WTC11 (cell line): ENCODE measurements at regions of chr9 and their contacts with region 1.

Region 1: DNA sequence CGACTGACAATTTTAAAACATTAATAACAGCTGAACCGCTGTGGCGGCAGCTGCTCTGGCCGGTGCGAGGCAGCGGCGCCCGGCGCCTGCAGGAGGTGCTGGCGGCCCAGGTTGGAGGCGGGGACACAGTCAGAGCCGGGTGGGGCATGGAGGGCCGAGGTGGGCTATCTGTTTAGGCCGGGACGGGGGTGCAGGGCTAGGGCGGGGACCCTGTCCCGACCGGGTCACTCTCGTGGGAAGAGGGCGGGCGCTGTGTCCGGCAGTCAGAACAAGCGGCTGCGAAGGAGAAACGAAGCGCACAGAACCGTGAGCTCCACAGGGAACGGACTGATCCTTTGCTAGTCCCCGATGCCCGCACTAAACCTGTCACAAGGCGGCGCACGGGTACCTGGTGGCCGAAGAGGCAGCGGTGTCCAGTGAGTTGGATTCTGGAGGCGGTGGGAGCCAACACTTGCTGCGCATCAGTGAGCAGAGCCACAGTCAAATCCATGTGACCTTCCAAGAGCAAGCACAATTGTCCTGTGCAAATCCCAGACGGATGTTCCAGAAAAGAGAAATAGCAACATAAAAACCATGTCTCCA is 13.7 kb upstream of the ALDOB start:
- DNase-seq: peak; percentile 91
- ATAC-seq: peak; percentile 98
- H3K4me3 Mint-ChIP-seq: peak overlapping the region; percentile 64
- H3K27ac Mint-ChIP-seq: no peak overlapping the region
- H3K4me1 Mint-ChIP-seq: peaks cover 14% of the 10 kb centered on the region
- H3K27me3 Mint-ChIP-seq: no peaks in the 10 kb centered on the region; the same call in none of the 2 replicates
- CTCF ChIP-seq: peak; percentile 44; the same call in 1 of the 2 replicates

Region 2: GRCh38 chr9:101365181-101365580 is 84.0 kb before region 1 on chr9:
- CTCF ChIA-PET with region 1: no interaction called
- POLR2A ChIA-PET with region 1: no interaction called
- DNase-seq: no peak
- ATAC-seq: no peak
- H3K4me3 Mint-ChIP-seq: no peak overlapping the region
- H3K27ac Mint-ChIP-seq: no peak overlapping the region
- H3K4me1 Mint-ChIP-seq: no peaks in the 10 kb centered on the region
- H3K27me3 Mint-ChIP-seq: no peaks in the 10 kb centered on the region
- CTCF ChIP-seq: no peak

Region 3: DNA sequence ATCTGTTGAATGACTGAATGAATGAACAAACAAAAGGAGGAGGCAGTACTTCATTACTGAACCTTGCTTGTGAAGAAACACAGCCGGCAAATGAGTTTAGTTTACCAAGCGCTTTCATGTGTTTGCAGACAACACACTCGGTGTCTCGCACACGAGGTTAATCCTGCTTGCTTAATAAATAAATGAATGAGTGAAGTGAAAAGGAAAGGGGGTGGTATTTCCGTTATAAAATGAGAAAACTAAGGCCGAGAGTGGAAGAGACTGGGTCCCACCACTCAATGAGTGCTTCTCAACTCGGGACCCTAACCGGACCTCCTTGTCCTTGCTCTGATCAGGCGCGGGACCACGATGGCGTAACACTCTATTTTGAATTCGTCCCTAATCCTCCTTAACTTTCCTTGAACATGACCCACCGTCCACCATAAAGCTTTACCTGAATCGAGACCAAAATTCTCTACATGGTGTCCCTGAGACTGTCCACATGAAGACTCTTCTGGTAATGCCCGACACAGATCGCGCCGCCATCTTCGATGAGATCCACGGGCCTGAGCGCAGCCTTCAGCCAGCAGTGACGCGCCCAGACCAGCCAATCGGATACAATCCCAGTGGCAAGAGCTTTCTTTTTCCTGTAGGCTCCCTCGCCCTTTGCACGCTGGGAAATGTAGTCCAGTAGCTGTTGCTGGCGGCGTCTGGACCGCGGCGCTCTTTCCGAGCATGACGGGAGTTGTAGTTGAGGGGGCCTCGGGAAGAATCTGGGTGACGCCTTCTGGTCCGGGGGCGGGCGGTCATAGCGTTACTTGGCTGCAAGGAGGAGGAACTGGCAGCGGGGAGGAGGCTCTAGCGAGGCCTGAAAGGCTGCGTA is 50.9 kb before region 1 on chr9 and contains the starts of genes MRPL50 and ZNF189:
- CTCF ChIA-PET with region 1: interaction called, 15 read pairs
- POLR2A ChIA-PET with region 1: no interaction called
- DNase-seq: peak; percentile 96
- ATAC-seq: peak; percentile 97
- H3K4me3 Mint-ChIP-seq: peak within 1 kb of the TSS; percentile 99
- H3K27ac Mint-ChIP-seq: peak within 1 kb of the TSS; percentile 99
- H3K4me1 Mint-ChIP-seq: peaks cover 25% of the 10 kb centered on the region
- H3K27me3 Mint-ChIP-seq: no peaks in the 10 kb centered on the region
- CTCF ChIP-seq: no peak
- total RNA-seq, gene MRPL50: 16.6 to 19.6 TPM (median 17.0 TPM) in 3 replicates
- total RNA-seq, gene ZNF189: 10.1 to 10.4 TPM (median 10.3 TPM) in 3 replicates

Region 4: DNA sequence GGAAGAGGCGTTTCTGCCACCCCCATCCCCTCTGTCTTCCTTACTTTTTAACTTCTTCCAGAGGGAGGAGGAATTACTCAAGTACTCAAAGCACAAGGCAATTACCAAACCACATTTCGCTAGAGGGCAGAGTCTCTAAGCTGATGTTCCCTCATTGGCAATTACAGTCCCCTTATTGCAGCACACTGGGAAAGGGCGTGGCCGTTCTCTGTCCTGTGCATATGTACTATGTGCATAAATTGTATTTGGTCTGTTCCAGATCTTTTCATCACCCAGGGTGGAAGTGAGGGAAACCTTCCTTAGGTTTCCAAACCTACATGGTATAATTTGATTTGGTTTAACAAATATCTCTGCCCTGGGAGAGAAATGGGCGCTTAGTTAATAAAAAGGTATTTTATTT is 16.2 kb after region 1 on chr9:
- CTCF ChIA-PET with region 1: interaction called, 39 read pairs
- POLR2A ChIA-PET with region 1: no interaction called
- DNase-seq: peak; percentile 25
- ATAC-seq: peak; percentile 65
- H3K4me3 Mint-ChIP-seq: no peak overlapping the region
- H3K27ac Mint-ChIP-seq: no peak overlapping the region
- H3K4me1 Mint-ChIP-seq: peaks cover 66% of the 10 kb centered on the region
- H3K27me3 Mint-ChIP-seq: no peaks in the 10 kb centered on the region
- CTCF ChIP-seq: no peak

Region 5: GRCh38 chr9:101486693-101487442 is 37.6 kb after region 1 on chr9:
- CTCF ChIA-PET with region 1: interaction called, 37 read pairs
- POLR2A ChIA-PET with region 1: interaction called, 6 read pairs
- DNase-seq: peak; percentile 82
- ATAC-seq: peak; percentile 92
- H3K4me3 Mint-ChIP-seq: peak overlapping the region; percentile 90
- H3K27ac Mint-ChIP-seq: peak overlapping the region; percentile 89
- H3K4me1 Mint-ChIP-seq: peaks cover 22% of the 10 kb centered on the region
- H3K27me3 Mint-ChIP-seq: peaks cover 6% of the 10 kb centered on the region
- CTCF ChIP-seq: no peak

Region 6: GRCh38 chr9:101524371-101524770 is 75.1 kb after region 1 on chr9:
- CTCF ChIA-PET with region 1: interaction called, 34 read pairs
- POLR2A ChIA-PET with region 1: no interaction called
- DNase-seq: no peak
- ATAC-seq: peak; percentile 57
- H3K4me3 Mint-ChIP-seq: no peak overlapping the region
- H3K27ac Mint-ChIP-seq: no peak overlapping the region
- H3K4me1 Mint-ChIP-seq: peaks cover 18% of the 10 kb centered on the region
- H3K27me3 Mint-ChIP-seq: peaks cover 4% of the 10 kb centered on the region
- CTCF ChIP-seq: no peak

Region 7: DNA sequence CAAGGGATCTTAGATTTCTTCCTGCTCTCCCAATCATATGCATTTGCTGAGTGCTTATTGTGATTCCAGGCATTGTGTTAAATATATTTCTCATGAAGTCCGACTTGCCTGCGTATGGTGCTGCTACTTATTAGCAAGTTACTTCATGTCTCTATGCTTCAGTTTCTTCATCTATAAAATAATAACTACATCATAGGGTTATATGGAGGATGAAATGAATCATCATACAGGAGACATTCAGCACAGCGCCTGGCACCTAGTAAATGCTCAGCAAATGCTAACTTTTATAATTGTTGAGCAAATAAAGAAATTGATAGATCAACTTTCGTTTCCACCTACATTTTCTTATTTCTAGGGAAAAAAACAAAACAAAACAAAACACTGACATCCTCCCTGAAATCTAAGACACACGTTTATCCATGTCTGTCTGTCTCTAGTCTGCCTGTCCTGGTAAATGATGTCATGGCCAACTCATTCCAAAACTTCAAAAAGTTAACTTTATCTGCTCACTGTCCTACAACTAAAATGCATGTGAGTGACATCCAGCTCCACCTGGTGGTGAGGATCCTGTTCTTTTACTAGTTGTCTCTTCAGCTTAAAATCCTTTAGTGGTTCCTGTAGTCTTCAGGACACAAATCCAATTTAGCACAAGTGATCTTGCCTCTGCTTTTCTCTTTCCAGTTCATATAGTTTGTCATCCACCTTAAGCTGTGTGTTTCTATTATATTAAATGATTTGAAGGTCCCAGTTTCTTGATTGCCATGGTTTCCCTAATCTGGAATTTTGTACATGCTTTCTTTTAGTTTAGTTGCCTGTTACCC is 117.9 kb after region 1 on chr9:
- CTCF ChIA-PET with region 1: interaction called, 11 read pairs
- POLR2A ChIA-PET with region 1: no interaction called
- DNase-seq: peak; percentile 31
- ATAC-seq: peak; percentile 56; the same call in 1 of the 2 replicates
- H3K4me3 Mint-ChIP-seq: no peak overlapping the region
- H3K27ac Mint-ChIP-seq: no peak overlapping the region
- H3K4me1 Mint-ChIP-seq: peaks cover 22% of the 10 kb centered on the region
- H3K27me3 Mint-ChIP-seq: no peaks in the 10 kb centered on the region
- CTCF ChIP-seq: no peak; the same call in 1 of the 2 replicates